Testis (tissue), 5 donors: ENCODE measurements at regions of chr1 and their contacts with region 1.

Region 1: GRCh38 chr1:27300341-27301051 is 21.5 kb upstream of the TMEM222 start:
- DNase-seq: peak; percentile 89
- H3K4me3 ChIP-seq: no peak overlapping the region
- H3K27ac ChIP-seq: no peak overlapping the region
- H3K4me1 ChIP-seq: peaks cover 19% of the 10 kb centered on the region
- H3K27me3 ChIP-seq: no peaks in the 10 kb centered on the region
- CTCF ChIP-seq: peak; percentile 96 to 99 (median 99)
- POLR2A ChIP-seq: no peak

Region 2: DNA sequence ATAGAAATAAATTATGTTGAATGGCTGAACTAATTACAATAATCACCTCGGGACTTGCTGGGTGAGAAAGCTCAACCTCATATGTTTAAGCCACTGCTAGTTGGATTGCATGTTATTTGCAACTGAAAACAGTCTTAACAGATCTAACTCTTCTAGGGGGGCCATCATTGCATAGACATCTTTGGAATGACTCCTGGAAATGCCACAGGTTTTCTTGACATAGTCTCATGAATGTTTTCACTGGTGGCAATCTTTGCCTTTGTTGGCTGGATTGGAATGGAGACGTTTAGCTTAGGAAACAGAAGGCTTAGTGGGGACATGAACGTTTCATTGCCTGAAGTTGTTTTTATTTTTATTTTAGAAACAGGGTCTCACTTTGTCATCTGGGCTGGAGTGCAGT is 74.9 kb before region 1 on chr1:
- intact Hi-C with region 1: no loop called
- DNase-seq: no peak
- H3K4me3 ChIP-seq: no peak overlapping the region
- H3K27ac ChIP-seq: no peak overlapping the region
- H3K4me1 ChIP-seq: no peaks in the 10 kb centered on the region
- H3K27me3 ChIP-seq: no peaks in the 10 kb centered on the region
- CTCF ChIP-seq: no peak
- POLR2A ChIP-seq: no peak

Region 3: GRCh38 chr1:27349784-27350662 is 49.5 kb after region 1 on chr1:
- intact Hi-C with region 1: no loop called
- DNase-seq: peak; percentile 70
- H3K4me3 ChIP-seq: peak overlapping the region; percentile 34 to 58
- H3K27ac ChIP-seq: no peak overlapping the region
- H3K4me1 ChIP-seq: peaks cover 8% of the 10 kb centered on the region
- H3K27me3 ChIP-seq: no peaks in the 10 kb centered on the region
- CTCF ChIP-seq: no peak
- POLR2A ChIP-seq: no peak

Region 4: DNA sequence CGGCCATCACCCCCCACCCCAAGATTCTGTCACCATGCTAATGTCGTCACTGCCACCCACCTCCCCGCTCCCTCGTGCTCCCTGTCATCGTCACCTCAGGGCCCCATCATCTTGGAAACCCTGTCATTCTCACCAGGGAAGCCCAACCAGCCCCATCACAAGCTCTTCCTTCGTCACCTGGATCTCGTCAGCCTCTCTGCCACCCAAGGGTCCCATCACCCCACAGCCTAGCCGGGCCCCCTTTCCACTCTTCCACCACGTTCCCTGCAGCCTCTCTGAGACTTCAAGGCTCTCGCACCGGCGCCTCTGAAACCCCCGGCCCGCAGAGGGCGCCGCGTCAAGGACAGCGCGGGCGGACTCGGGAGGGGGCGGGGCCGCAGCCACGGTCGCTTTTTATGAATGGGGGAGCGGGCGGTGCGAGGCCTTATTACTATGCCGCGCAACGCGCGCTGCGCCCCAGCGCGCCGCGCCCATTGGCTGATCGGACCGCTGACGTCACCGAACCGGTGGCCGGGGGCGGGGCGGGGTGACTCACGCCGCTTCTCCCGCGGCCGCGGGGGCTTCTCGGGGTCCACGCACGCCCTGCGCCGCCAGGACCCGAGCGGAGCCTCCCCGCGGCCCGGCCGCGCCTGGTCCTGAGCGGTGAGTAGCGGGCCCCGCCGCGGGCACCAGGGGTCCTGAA is 91.7 kb after region 1 on chr1 and contains the start of gene GPR3:
- intact Hi-C with region 1: loop called (anchors 5 kb)
- DNase-seq: peak; percentile 94
- H3K4me3 ChIP-seq: peak within 1 kb of the TSS; percentile 48 to 54
- H3K27ac ChIP-seq: no peak within 1 kb of the TSS
- H3K4me1 ChIP-seq: peaks cover 17% of the 10 kb centered on the region
- H3K27me3 ChIP-seq: no peaks in the 10 kb centered on the region
- CTCF ChIP-seq: peak; percentile 26 to 37 (median 36)
- POLR2A ChIP-seq: no peak
- total RNA-seq, gene GPR3: 0.12 to 0.47 TPM